ENCODE measurements at regions of chr1 and their contacts with region 1.

Region 1: DNA sequence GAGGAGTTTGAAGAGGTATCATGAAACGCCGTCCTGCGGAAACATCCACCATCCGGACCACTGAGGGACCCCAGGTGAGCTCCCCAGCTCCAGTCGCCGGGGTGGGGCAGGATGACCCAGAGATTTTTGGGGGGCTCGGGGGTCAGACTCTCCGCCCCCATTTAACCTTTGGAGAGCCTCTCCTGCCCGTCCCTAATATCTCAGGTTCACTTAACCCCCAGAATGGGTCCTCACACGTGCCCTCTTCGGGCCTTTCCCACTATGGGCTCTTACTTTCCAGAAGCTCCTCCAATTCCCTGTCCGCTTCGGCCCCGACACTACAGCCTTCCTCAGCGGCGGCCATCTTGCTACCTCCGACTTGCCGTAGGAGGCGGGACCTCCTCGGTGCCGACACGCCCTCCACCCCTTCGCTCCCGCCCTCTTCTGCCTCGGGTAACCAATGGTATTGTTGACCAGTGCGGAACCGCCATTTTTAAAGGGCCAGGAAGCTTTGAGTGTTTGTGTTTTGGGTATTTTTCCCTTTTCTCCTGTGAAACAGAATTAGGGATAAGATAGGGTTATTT is at the start of gene PEX19:
- DNase-seq: no peak
- ATAC-seq: peak; percentile 99
- H3K4me3 ChIP-seq: peak within 1 kb of the TSS; percentile 87 to 89
- H3K27ac ChIP-seq: peak within 1 kb of the TSS; percentile 86
- H3K4me1 ChIP-seq: 0 out of 2 replicates have a peak, but pooled peaks cover 5% of the 10 kb centered on the region
- H3K27me3 ChIP-seq: no peaks in the 10 kb centered on the region
- CTCF ChIP-seq: no peak
- total RNA-seq, gene PEX19: 55.1 TPM

Region 2: GRCh38 chr1:160097911-160098851 is 186.7 kb before region 1 on chr1 and contains the start of gene IGSF8:
- CTCF ChIA-PET with region 1: no interaction called
- POLR2A ChIA-PET with region 1: no interaction called
- in situ Hi-C with region 1: no loop called
- intact Hi-C with region 1: no loop called
- DNase-seq: no peak
- ATAC-seq: peak; percentile 75
- H3K4me3 ChIP-seq: peak within 1 kb of the TSS; percentile 60 to 84
- H3K27ac ChIP-seq: peak within 1 kb of the TSS; percentile 77
- H3K4me1 ChIP-seq: peaks cover 3% of the 10 kb centered on the region; the same call in 1 of the 2 replicates
- H3K27me3 ChIP-seq: no peaks in the 10 kb centered on the region
- CTCF ChIP-seq: no peak
- total RNA-seq, gene IGSF8: 18.8 TPM

Region 3: GRCh38 chr1:160251687-160252526 is 33.0 kb before region 1 on chr1:
- CTCF ChIA-PET with region 1: interaction called, 3 read pairs
- POLR2A ChIA-PET with region 1: interaction called, 11 read pairs
- in situ Hi-C with region 1: no loop called
- intact Hi-C with region 1: no loop called
- DNase-seq: no peak
- ATAC-seq: peak; percentile 97
- H3K4me3 ChIP-seq: no peak overlapping the region
- H3K27ac ChIP-seq: no peak overlapping the region
- H3K4me1 ChIP-seq: no peaks in the 10 kb centered on the region
- H3K27me3 ChIP-seq: no peaks in the 10 kb centered on the region
- CTCF ChIP-seq: peak; percentile 74

Region 4: GRCh38 chr1:160267284-160267991 is 17.4 kb before region 1 on chr1:
- CTCF ChIA-PET with region 1: no interaction called
- POLR2A ChIA-PET with region 1: interaction called, 13 read pairs
- in situ Hi-C with region 1: no loop called
- intact Hi-C with region 1: no loop called
- DNase-seq: no peak
- ATAC-seq: no peak
- H3K4me3 ChIP-seq: no peak overlapping the region
- H3K27ac ChIP-seq: no peak overlapping the region
- H3K4me1 ChIP-seq: peaks cover 6% of the 10 kb centered on the region
- H3K27me3 ChIP-seq: no peaks in the 10 kb centered on the region
- CTCF ChIP-seq: no peak

Region 5: GRCh38 chr1:160795951-160796383 is 511.1 kb after region 1 on chr1 and contains the start of gene LY9:
- CTCF ChIA-PET with region 1: no interaction called
- POLR2A ChIA-PET with region 1: no interaction called
- in situ Hi-C with region 1: no loop called
- intact Hi-C with region 1: no loop called
- DNase-seq: no peak
- ATAC-seq: no peak
- H3K4me3 ChIP-seq: no peak within 1 kb of the TSS
- H3K27ac ChIP-seq: no peak within 1 kb of the TSS
- H3K4me1 ChIP-seq: no peaks in the 10 kb centered on the region
- H3K27me3 ChIP-seq: 0 out of 2 replicates have a peak, but pooled peaks cover 2% of the 10 kb centered on the region
- CTCF ChIP-seq: no peak
- total RNA-seq, gene LY9: 0.10 TPM